Activated CD4-positive, alpha-beta T cell treated with anti-CD3 and anti-CD28 coated beads, Interleukin-2, amount 10 ng/mL, durations not matched to agents 7 days and 5 days (primary cell): ENCODE measurements at regions of chr2 and their contacts with region 1.

Region 1: GRCh38 chr2:172442072-172442895 is 14.9 kb downstream of the ITGA6 start:
- DNase-seq: peak; percentile 32
- H3K4me3 Mint-ChIP-seq: peak overlapping the region; percentile 48
- H3K27ac Mint-ChIP-seq: peak overlapping the region; percentile 54
- H3K4me1 Mint-ChIP-seq: peaks cover 43% of the 10 kb centered on the region
- H3K27me3 Mint-ChIP-seq: peaks cover 3% of the 10 kb centered on the region

Region 2: DNA sequence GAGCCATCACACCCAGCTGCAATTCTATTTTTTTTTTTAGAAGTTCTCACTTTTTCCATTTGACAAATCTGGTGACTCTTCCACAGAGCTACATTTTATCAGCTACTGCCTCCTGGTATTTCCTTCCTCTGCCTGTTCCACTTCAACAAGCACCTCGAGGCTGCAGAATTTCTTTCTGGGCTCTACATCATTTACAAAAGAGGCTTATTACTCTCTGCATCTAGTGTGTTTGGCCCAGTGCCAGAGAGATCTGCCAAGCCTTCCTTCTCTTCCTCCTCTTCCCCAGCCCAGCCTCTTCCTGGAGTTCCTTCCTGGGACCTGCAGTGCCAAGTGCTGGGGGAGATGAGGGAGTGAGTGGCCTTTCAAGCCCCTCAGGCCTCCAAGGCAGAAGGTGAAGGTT is 134.5 kb before region 1 on chr2:
- CTCF ChIA-PET with region 1: no interaction called
- POLR2A ChIA-PET with region 1: no interaction called
- DNase-seq: no peak
- H3K4me3 Mint-ChIP-seq: no peak overlapping the region
- H3K27ac Mint-ChIP-seq: no peak overlapping the region
- H3K4me1 Mint-ChIP-seq: no peaks in the 10 kb centered on the region
- H3K27me3 Mint-ChIP-seq: peaks cover 2% of the 10 kb centered on the region

Region 3: GRCh38 chr2:172427256-172427989 is 14.9 kb before region 1 on chr2 and contains the start of gene ITGA6:
- CTCF ChIA-PET with region 1: interaction called, 11 read pairs
- POLR2A ChIA-PET with region 1: no interaction called
- DNase-seq: peak; percentile 73
- H3K4me3 Mint-ChIP-seq: peak within 1 kb of the TSS; percentile 83
- H3K27ac Mint-ChIP-seq: peak within 1 kb of the TSS; percentile 76
- H3K4me1 Mint-ChIP-seq: peaks cover 65% of the 10 kb centered on the region
- H3K27me3 Mint-ChIP-seq: peaks cover 34% of the 10 kb centered on the region
- total RNA-seq, gene ITGA6: 46.7 to 47.2 TPM